ENCODE measurements at regions of chr1 and their contacts with region 1.

Region 1: DNA sequence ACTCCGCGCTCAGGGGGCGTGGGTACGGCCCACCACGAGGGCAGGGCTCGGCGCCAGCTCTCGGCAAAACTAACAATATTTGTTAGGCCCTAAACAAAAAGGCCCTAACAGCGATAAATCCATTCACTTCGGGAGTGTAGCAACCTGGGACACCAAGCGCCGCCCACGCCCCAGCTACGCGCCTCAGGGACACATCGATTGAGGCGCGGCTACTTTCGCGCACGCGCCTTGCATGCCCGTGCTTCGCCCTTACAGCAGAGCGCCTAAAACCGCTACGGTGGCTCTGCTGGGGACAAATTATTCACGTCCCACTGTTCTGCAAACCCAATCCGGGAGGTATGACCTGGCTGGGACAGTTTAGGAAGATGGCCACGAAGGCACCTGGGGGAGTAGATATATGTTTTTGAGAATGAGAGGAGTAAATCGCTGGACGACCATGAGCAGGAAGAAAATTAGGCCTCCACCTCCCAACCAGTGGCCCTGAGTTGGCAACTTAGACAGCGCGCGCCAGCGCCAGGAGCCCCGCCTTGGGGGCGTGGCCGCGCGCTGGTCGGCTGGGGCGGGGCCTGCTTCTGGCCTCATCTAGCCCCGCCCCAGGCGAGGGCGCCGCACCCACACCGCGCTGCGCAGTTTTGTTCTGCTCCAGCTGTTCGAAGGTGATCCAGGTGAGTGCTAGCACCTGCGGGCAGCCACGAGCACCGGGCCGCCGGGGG is at the start of gene MGST3:
- DNase-seq: peak; percentile 94
- ATAC-seq: peak; percentile 89
- H3K4me3 ChIP-seq: peak within 1 kb of the TSS; percentile 87 to 88
- H3K27ac ChIP-seq: peak within 1 kb of the TSS; percentile 65
- H3K4me1 ChIP-seq: peaks cover 10 to 31% of the 10 kb centered on the region in 2 experiments
- H3K27me3 ChIP-seq: no peaks in the 10 kb centered on the region
- CTCF ChIP-seq: no peak
- POLR2A ChIP-seq: peak; percentile 78
- RAD21 ChIP-seq: no peak
- total RNA-seq, gene MGST3: 93.7 TPM

Region 2: GRCh38 chr1:165697881-165698760 is 67.3 kb after region 1 on chr1 and contains the start of gene ALDH9A1:
- CTCF ChIA-PET with region 1: no interaction called
- POLR2A ChIA-PET with region 1: interaction called, 3 read pairs
- RAD21 ChIA-PET with region 1: interaction called in 1 of 2 experiments, 6 read pairs
- intact Hi-C with region 1: loop called (anchors 5 kb)
- DNase-seq: peak; percentile 65
- ATAC-seq: peak; percentile 93
- H3K4me3 ChIP-seq: peak within 1 kb of the TSS; percentile 72 to 92
- H3K27ac ChIP-seq: peak within 1 kb of the TSS; percentile 97
- H3K4me1 ChIP-seq: peaks cover 12 to 23% of the 10 kb centered on the region in 2 experiments
- H3K27me3 ChIP-seq: no peaks in the 10 kb centered on the region
- CTCF ChIP-seq: peak in 2 of 3 experiments; percentile 38 to 45; a peak in 5 of 6 replicates
- POLR2A ChIP-seq: peak; percentile 81
- RAD21 ChIP-seq: peak; percentile 47
- total RNA-seq, gene ALDH9A1: 46.0 TPM

Region 3: DNA sequence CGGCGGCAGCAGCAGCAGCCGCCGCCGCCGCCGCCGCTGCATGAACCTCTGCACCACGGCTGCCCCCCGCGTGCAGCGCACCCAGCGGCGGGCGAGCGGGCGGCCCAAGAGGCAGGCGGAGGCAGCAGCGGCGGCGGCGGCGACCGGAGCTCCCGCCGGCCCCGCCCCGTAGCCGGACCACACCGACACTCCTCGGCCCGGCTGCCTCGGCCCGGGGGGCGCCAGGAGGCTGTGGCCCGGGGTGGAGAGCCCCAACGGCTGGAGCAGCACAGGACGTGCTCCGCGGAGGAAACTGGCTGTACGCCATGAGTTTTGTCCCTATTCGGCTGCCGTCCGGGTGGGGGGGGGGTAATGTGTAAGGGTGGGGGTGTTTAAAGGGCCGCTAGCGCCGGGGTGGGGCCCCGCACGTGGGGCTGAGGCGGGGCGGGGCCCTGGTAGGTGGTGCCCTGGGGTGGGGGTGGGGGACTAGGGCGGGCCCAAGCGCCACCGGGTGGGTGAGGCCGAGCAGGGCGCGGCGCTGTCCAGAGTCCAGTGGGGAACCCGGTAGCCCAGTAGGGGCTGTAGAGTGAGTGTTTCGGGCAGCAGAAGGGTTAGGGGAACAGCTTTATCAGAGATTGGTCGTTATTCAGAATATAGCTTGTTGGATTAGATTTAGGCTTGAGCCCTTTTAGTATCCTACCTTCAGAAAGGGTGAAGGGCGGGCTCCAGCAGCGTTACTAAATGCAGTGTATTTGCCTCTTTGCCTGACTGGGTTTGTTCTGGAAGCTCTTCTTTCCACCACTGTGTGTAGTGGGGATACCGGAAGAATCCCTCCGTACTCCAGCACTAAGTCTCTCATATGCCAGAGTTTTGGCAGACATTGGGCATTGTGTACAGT is 536.1 kb after region 1 on chr1 and contains the start of gene FAM78B:
- CTCF ChIA-PET with region 1: no interaction called
- POLR2A ChIA-PET with region 1: no interaction called
- RAD21 ChIA-PET with region 1: no interaction called
- intact Hi-C with region 1: loop called (anchors 5 kb)
- DNase-seq: peak; percentile 42
- ATAC-seq: peak; percentile 83
- H3K4me3 ChIP-seq: peak within 1 kb of the TSS; percentile 41 to 54
- H3K27ac ChIP-seq: peak within 1 kb of the TSS; percentile 32; the same call in 1 of the 2 replicates
- H3K4me1 ChIP-seq: peaks cover 0 to 31% of the 10 kb centered on the region in 2 experiments; a peak in 3 of 4 replicates
- H3K27me3 ChIP-seq: no peaks in the 10 kb centered on the region
- CTCF ChIP-seq: 0 out of 6 replicates have a peak, but pooled peaks of 1 of the 3 experiments have one; percentile 2
- POLR2A ChIP-seq: no peak
- RAD21 ChIP-seq: no peak
- total RNA-seq, gene FAM78B: 1.4 TPM